ENCODE measurements at regions of chr17 and their contacts with region 1.

Region 1: GRCh38 chr17:38729886-38730525 is at the start of gene CISD3:
- DNase-seq: peak; percentile 95
- H3K4me3 ChIP-seq: peak within 1 kb of the TSS; percentile 78 to 79
- H3K27ac ChIP-seq: peak within 1 kb of the TSS; percentile 73 to 98
- H3K4me1 ChIP-seq: peaks cover 6 to 68% of the 10 kb centered on the region in 2 experiments; a peak in 1 of 4 replicates
- H3K27me3 ChIP-seq: no peaks in the 10 kb centered on the region
- CTCF ChIP-seq: peak; percentile 54
- EP300 ChIP-seq: no peak; a peak in 1 of 4 replicates
- RAD21 ChIP-seq: peak; percentile 40; the same call in 1 of the 2 replicates
- polyA plus RNA-seq, gene CISD3: 12.9 and 16.5 TPM in 2 replicates

Region 2: GRCh38 chr17:38702166-38702899 is 27.7 kb before region 1 on chr17:
- CTCF ChIA-PET with region 1: interaction called, 25 read pairs
- POLR2A ChIA-PET with region 1: interaction called, 14 read pairs
- DNase-seq: peak; percentile 94
- H3K4me3 ChIP-seq: peak overlapping the region; percentile 71 to 81
- H3K27ac ChIP-seq: peak overlapping the region; percentile 71 to 86
- H3K4me1 ChIP-seq: peaks cover 10 to 36% of the 10 kb centered on the region in 2 experiments; a peak in 2 of 4 replicates
- H3K27me3 ChIP-seq: no peaks in the 10 kb centered on the region
- CTCF ChIP-seq: no peak
- EP300 ChIP-seq: peak in 1 of 2 experiments; percentile 26; a peak in 1 of 4 replicates
- RAD21 ChIP-seq: no peak

Region 3: GRCh38 chr17:38742411-38743308 is 12.7 kb after region 1 on chr17:
- CTCF ChIA-PET with region 1: interaction called, 88 read pairs
- POLR2A ChIA-PET with region 1: interaction called, 9 read pairs
- DNase-seq: peak; percentile 84
- H3K4me3 ChIP-seq: peak overlapping the region in 1 of 2 experiments; percentile 13; a peak in 1 of 4 replicates
- H3K27ac ChIP-seq: peak overlapping the region; percentile 83 to 95
- H3K4me1 ChIP-seq: peaks cover 9 to 64% of the 10 kb centered on the region in 2 experiments; a peak in 2 of 4 replicates
- H3K27me3 ChIP-seq: no peaks in the 10 kb centered on the region
- CTCF ChIP-seq: no peak
- EP300 ChIP-seq: peak in 1 of 2 experiments; percentile 68; a peak in 1 of 4 replicates
- RAD21 ChIP-seq: peak; percentile 1; the same call in 1 of the 2 replicates

Region 4: DNA sequence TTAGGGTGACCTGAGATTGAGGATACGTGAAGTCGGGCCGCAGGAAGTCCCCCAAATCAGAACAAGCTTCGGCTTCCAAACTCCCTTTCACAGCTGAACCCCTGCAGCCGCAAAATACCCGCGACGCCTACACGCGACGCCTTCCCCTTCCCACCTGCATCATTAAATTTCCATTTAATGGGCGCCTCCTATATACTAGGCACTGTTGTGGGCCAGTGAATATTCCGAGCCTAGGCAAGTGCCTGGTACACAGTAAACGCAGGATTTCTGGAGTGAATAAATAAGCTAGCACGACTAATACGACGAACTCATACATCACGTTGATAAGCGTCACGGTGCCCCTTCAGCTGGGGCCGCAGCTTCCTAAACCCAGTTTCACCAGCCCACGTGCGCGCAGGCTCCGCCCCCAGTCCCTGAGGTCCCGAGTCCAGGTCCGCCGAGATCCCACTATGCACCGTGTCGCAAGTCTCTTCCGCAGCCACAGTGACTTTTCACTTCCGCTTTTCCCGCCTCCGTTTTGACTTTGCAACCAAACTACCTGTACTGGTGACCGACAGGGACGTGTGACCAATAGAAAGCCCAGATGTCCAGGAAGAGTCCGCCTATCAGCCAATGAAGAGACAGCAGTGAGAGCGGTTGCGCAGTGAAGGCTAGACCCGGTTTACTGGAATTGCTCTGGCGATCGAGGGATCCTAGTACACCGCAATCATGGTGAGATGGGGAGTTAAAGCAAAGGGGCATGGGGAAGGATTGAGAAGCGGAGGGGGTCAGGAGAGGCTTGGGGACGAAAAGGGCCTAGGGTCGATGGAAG is 22.3 kb after region 1 on chr17 and contains the start of gene PSMB3:
- CTCF ChIA-PET with region 1: interaction called, 88 read pairs
- POLR2A ChIA-PET with region 1: interaction called, 6 read pairs
- DNase-seq: peak; percentile 91
- H3K4me3 ChIP-seq: peak within 1 kb of the TSS; percentile 91 to 93
- H3K27ac ChIP-seq: peak within 1 kb of the TSS; percentile 74 to 98
- H3K4me1 ChIP-seq: peaks cover 0 to 20% of the 10 kb centered on the region in 2 experiments; a peak in 1 of 4 replicates
- H3K27me3 ChIP-seq: no peaks in the 10 kb centered on the region
- CTCF ChIP-seq: no peak
- EP300 ChIP-seq: no peak
- RAD21 ChIP-seq: no peak
- polyA plus RNA-seq, gene PSMB3: 480 and 533 TPM in 2 replicates

Region 5: GRCh38 chr17:38853292-38854219 is 123.5 kb after region 1 on chr17 and contains the start of gene RPL23:
- CTCF ChIA-PET with region 1: no interaction called
- POLR2A ChIA-PET with region 1: no interaction called
- DNase-seq: peak; percentile 88
- H3K4me3 ChIP-seq: peak within 1 kb of the TSS; percentile 74 to 91
- H3K27ac ChIP-seq: peak within 1 kb of the TSS; percentile 95 to 96
- H3K4me1 ChIP-seq: peaks cover 17 to 20% of the 10 kb centered on the region in 2 experiments; a peak in 2 of 4 replicates
- H3K27me3 ChIP-seq: no peaks in the 10 kb centered on the region
- CTCF ChIP-seq: no peak
- EP300 ChIP-seq: no peak
- RAD21 ChIP-seq: no peak
- polyA plus RNA-seq, gene RPL23: 2,658 and 2,763 TPM in 2 replicates

Region 6: DNA sequence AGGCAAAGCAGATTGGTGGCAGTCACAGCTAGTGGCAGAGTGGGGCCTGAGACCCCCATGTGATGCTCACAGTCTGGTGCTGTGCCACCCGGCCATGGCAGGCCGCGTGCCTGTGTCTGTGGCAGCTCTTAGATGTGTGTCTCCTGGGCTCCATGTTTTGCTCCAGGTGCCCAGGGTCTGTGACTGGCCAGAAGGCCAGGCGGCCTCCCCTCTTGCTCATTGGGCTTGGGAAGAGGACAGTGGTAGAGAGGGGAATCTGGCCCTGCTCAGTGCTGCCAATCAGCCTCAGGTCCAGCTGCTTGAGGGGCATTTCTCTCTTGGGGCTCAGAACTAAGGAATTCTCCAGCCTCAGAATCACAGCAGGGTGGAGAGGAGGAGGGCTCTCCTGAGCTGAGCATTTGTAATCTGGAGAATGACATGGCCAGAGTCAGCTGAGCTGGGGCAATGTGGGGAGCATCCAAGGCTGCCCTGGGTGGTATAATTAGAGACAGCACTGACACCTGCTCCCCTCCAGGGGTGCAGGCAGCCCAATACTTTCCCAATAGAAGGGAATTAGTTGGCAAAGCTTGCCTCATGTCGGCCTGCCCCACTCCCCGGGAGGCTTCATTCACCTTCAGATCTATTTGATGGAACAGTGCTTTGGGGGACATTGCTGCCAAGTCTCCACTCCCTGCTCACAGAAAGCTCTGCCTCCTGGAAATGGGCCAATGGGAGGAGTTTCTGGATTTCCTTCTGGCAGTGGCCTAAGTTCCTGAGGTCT is 192.7 kb after region 1 on chr17:
- CTCF ChIA-PET with region 1: no interaction called
- POLR2A ChIA-PET with region 1: no interaction called
- DNase-seq: peak; percentile 52
- H3K4me3 ChIP-seq: no peak overlapping the region
- H3K27ac ChIP-seq: peak overlapping the region; percentile 49 to 67; a peak in 3 of 4 replicates
- H3K4me1 ChIP-seq: peaks cover 9 to 27% of the 10 kb centered on the region in 2 experiments; a peak in 2 of 4 replicates
- H3K27me3 ChIP-seq: no peaks in the 10 kb centered on the region
- CTCF ChIP-seq: no peak
- EP300 ChIP-seq: no peak; a peak in 1 of 4 replicates
- RAD21 ChIP-seq: no peak

Measured in SK-N-SH (cell line).